SK-N-SH (cell line): ENCODE measurements at regions of chr11 and their contacts with region 1.

Region 1: GRCh38 chr11:7571640-7572000 is 57.8 kb downstream of the PPFIBP2 start:
- DNase-seq: peak; percentile 70
- H3K4me3 ChIP-seq: no peak overlapping the region; a peak in 1 of 4 replicates
- H3K27ac ChIP-seq: no peak overlapping the region; a peak in 1 of 4 replicates
- H3K4me1 ChIP-seq: peaks cover 0 to 23% of the 10 kb centered on the region in 2 experiments; a peak in 1 of 4 replicates
- H3K27me3 ChIP-seq: peaks cover 4% of the 10 kb centered on the region; the same call in 1 of the 2 replicates
- CTCF ChIP-seq: peak; percentile 95
- EP300 ChIP-seq: no peak
- RAD21 ChIP-seq: peak; percentile 96

Region 2: GRCh38 chr11:7442588-7443215 is 128.9 kb before region 1 on chr11:
- CTCF ChIA-PET with region 1: interaction called, 10 read pairs
- POLR2A ChIA-PET with region 1: no interaction called
- DNase-seq: peak; percentile 67
- H3K4me3 ChIP-seq: peak overlapping the region in 1 of 2 experiments; percentile 19; a peak in 1 of 4 replicates
- H3K27ac ChIP-seq: no peak overlapping the region
- H3K4me1 ChIP-seq: no peaks in the 10 kb centered on the region
- H3K27me3 ChIP-seq: no peaks in the 10 kb centered on the region
- CTCF ChIP-seq: peak; percentile 87
- EP300 ChIP-seq: no peak
- RAD21 ChIP-seq: peak; percentile 94

Region 3: DNA sequence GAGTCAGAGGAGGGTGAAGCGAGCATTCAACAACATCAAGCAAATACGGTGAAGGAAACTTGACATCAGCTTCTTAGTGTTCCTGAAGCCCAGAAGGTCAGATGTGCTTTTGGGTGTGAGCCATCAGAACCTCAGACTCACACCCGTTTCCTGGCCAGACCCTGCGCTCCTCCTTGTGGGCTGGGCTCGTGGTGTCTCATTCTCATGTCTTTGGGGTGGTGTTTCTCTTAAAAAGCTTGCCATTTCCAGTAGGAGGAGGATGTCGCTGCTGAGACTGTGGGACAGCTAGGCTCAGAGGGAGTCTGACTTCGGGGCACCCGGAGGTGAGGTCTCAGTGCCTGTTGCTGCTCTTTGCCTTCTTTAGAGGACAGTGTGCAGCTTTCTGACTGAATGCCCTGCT is 33.6 kb before region 1 on chr11:
- CTCF ChIA-PET with region 1: interaction called, 20 read pairs
- POLR2A ChIA-PET with region 1: no interaction called
- DNase-seq: no peak
- H3K4me3 ChIP-seq: no peak overlapping the region
- H3K27ac ChIP-seq: no peak overlapping the region
- H3K4me1 ChIP-seq: peaks cover 0 to 21% of the 10 kb centered on the region in 2 experiments; a peak in 2 of 4 replicates
- H3K27me3 ChIP-seq: no peaks in the 10 kb centered on the region; the same call in 1 of the 2 replicates
- CTCF ChIP-seq: no peak
- EP300 ChIP-seq: no peak
- RAD21 ChIP-seq: no peak

Region 4: GRCh38 chr11:7559398-7560283 is 12.0 kb before region 1 on chr11:
- CTCF ChIA-PET with region 1: interaction called, 22 read pairs
- POLR2A ChIA-PET with region 1: no interaction called
- DNase-seq: no peak
- H3K4me3 ChIP-seq: no peak overlapping the region
- H3K27ac ChIP-seq: no peak overlapping the region
- H3K4me1 ChIP-seq: peaks cover 0 to 18% of the 10 kb centered on the region in 2 experiments; a peak in 2 of 4 replicates
- H3K27me3 ChIP-seq: no peaks in the 10 kb centered on the region
- CTCF ChIP-seq: no peak
- EP300 ChIP-seq: no peak
- RAD21 ChIP-seq: no peak

Region 5: DNA sequence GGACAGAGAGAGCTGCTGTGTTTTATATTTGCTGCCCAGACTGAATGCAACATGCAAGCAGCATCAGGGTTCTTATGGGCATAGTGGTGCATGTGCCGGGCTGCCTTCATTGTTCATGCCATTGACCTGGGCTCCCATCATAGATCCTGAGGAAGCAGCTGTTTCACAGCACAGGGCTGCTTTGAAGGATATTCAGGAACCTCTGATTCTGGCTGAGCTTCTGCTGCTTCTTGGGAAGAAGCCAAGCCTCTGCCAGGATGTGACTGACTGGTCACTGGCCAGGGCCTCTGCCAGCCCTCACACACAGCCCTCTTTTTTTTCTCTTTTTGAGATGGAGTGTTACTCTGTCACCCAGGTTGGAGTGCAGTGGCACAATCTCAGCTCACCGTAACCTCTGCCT is 58.4 kb after region 1 on chr11:
- CTCF ChIA-PET with region 1: interaction called, 14 read pairs
- POLR2A ChIA-PET with region 1: no interaction called
- DNase-seq: no peak
- H3K4me3 ChIP-seq: no peak overlapping the region
- H3K27ac ChIP-seq: peak overlapping the region in 1 of 2 experiments; percentile 47; a peak in 1 of 4 replicates
- H3K4me1 ChIP-seq: peaks cover 0 to 11% of the 10 kb centered on the region in 2 experiments; a peak in 1 of 4 replicates
- H3K27me3 ChIP-seq: no peaks in the 10 kb centered on the region
- CTCF ChIP-seq: no peak
- EP300 ChIP-seq: no peak
- RAD21 ChIP-seq: no peak

Region 6: DNA sequence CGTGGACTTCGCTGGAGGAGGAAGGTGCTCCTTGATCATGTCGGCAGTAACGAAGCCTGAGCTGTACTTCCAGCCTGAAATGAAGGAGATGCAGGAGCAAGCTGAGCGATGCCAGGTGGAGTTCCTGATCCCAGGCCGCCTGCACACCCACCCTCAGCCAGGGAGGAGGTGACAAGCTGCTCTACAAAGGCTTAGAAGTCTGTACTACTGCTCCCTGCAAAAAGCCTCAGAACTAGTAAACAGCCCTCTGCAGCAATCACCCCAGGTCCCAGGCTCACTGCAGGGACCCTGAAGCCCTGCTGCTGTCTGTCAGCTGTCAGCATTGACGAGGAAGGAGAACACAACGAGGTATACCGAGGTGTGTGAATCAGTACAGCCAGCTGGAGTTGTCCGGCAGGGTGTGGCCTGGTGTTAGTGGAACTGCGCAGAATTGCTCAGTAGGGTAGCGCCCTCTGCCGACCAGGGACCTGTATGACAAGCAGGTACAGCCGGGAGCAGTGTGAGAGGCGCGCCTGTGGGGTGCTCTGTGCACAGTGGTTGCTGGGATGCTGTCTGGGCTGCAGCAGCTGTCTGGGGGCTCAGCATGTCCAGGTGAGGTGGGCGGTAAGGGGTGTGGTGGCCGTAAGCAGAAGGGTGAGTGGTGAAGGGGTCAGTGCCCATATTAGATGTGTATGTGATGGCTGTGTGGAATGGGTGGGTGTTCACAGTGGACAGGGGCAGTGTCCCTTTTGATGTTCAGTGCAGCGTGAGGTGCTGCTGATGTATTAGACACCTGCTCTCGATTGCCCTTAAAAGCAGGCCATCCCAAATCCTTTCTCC is 94.1 kb after region 1 on chr11:
- CTCF ChIA-PET with region 1: interaction called, 256 read pairs
- POLR2A ChIA-PET with region 1: no interaction called
- DNase-seq: peak; percentile 90
- H3K4me3 ChIP-seq: no peak overlapping the region; a peak in 1 of 4 replicates
- H3K27ac ChIP-seq: no peak overlapping the region
- H3K4me1 ChIP-seq: peaks cover 0 to 2% of the 10 kb centered on the region in 2 experiments; a peak in 1 of 4 replicates
- H3K27me3 ChIP-seq: no peaks in the 10 kb centered on the region
- CTCF ChIP-seq: peak; percentile 79
- EP300 ChIP-seq: no peak
- RAD21 ChIP-seq: peak; percentile 93

Region 7: GRCh38 chr11:7696424-7696823 is 124.8 kb after region 1 on chr11:
- CTCF ChIA-PET with region 1: interaction called, 71 read pairs
- POLR2A ChIA-PET with region 1: no interaction called
- DNase-seq: no peak
- H3K4me3 ChIP-seq: no peak overlapping the region
- H3K27ac ChIP-seq: no peak overlapping the region
- H3K4me1 ChIP-seq: peaks cover 0 to 2% of the 10 kb centered on the region in 2 experiments; a peak in 1 of 4 replicates
- H3K27me3 ChIP-seq: peaks cover 20% of the 10 kb centered on the region; the same call in 1 of the 2 replicates
- CTCF ChIP-seq: no peak
- EP300 ChIP-seq: no peak
- RAD21 ChIP-seq: no peak

Region 8: GRCh38 chr11:7851391-7851790 is 279.8 kb after region 1 on chr11:
- CTCF ChIA-PET with region 1: no interaction called
- POLR2A ChIA-PET with region 1: no interaction called
- DNase-seq: no peak
- H3K4me3 ChIP-seq: no peak overlapping the region
- H3K27ac ChIP-seq: no peak overlapping the region
- H3K4me1 ChIP-seq: no peaks in the 10 kb centered on the region; a peak in 1 of 4 replicates
- H3K27me3 ChIP-seq: peaks cover 28% of the 10 kb centered on the region
- CTCF ChIP-seq: no peak
- EP300 ChIP-seq: no peak
- RAD21 ChIP-seq: no peak